Body of pancreas (tissue), 4 donors: ENCODE measurements at regions of chr14 and their contacts with region 1.

Region 1: GRCh38 chr14:74249433-74250375 is 10.5 kb downstream of the VSX2 start:
- DNase-seq: no peak
- ATAC-seq: no peak
- H3K4me3 ChIP-seq: no peak overlapping the region
- H3K27ac ChIP-seq: no peak overlapping the region
- H3K4me1 ChIP-seq: peaks cover 3% of the 10 kb centered on the region
- H3K27me3 ChIP-seq: no peaks in the 10 kb centered on the region
- CTCF ChIP-seq: no peak
- POLR2A ChIP-seq: no peak

Region 2: DNA sequence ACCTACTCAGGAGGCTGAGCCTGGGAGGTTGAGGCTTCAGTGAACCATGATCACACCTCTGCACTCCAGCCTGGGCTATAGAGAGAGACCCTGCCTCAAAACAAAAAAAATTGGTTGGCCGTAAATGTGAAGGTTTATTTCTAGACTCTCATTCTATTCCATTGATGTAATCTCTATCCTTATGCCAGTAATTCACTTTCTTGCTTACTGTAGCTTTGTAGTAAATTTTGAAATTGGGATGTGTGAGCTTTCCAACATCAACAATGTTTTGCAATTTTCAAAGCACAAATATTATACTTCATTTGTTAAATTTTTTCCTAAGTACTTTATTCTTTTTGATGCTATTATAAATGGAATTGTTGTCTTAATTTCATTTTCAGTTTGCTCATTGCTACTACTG is 140.3 kb before region 1 on chr14:
- intact Hi-C with region 1: loop called (anchors 5 kb)
- DNase-seq: no peak
- ATAC-seq: no peak
- H3K4me3 ChIP-seq: no peak overlapping the region
- H3K27ac ChIP-seq: no peak overlapping the region
- H3K4me1 ChIP-seq: no peaks in the 10 kb centered on the region
- H3K27me3 ChIP-seq: no peaks in the 10 kb centered on the region
- CTCF ChIP-seq: no peak
- POLR2A ChIP-seq: no peak